CD4-positive, alpha-beta memory T cell (primary cell): ENCODE measurements at regions of chr22 and their contacts with region 1.

Region 1: GRCh38 chr22:23849009-23850006 is 8.4 kb upstream of the SLC2A11 start:
- DNase-seq: peak; percentile 79 to 86 (median 80)
- H3K4me3 ChIP-seq: no peak overlapping the region
- H3K4me3 Mint-ChIP-seq: no peak overlapping the region
- H3K27ac ChIP-seq: no peak overlapping the region
- H3K27ac Mint-ChIP-seq: peak overlapping the region in 1 of 7 donors; percentile 7
- H3K4me1 ChIP-seq: peaks cover 7% of the 10 kb centered on the region
- H3K4me1 Mint-ChIP-seq: peaks cover 0 to 4% (median 2%) of the 10 kb centered on the region in 4 donors
- H3K27me3 ChIP-seq: no peaks in the 10 kb centered on the region
- H3K27me3 Mint-ChIP-seq: no peaks in the 10 kb centered on the region

Region 2: GRCh38 chr22:23539135-23539838 is 310.0 kb before region 1 on chr22:
- CTCF ChIA-PET with region 1: interaction called, 7 read pairs
- POLR2A ChIA-PET with region 1: no interaction called
- intact Hi-C with region 1: loop called (anchors 5 kb)
- DNase-seq: peak; percentile 67 to 74 (median 70)
- H3K4me3 ChIP-seq: no peak overlapping the region
- H3K4me3 Mint-ChIP-seq: peak overlapping the region in 7 of 8 donors; percentile 29 to 79 (median 51)
- H3K27ac ChIP-seq: no peak overlapping the region
- H3K27ac Mint-ChIP-seq: peak overlapping the region in 3 of 7 donors; percentile 1 to 46 (median 31)
- H3K4me1 ChIP-seq: peaks cover 4% of the 10 kb centered on the region
- H3K4me1 Mint-ChIP-seq: peaks cover 3 to 10% (median 8%) of the 10 kb centered on the region in 4 donors
- H3K27me3 ChIP-seq: no peaks in the 10 kb centered on the region
- H3K27me3 Mint-ChIP-seq: peaks cover 1 to 5% of the 10 kb centered on the region in 2 donors

Region 3: GRCh38 chr22:23622634-23623033 is 226.7 kb before region 1 on chr22:
- CTCF ChIA-PET with region 1: interaction called, 7 read pairs
- POLR2A ChIA-PET with region 1: no interaction called
- intact Hi-C with region 1: loop called (anchors 5 kb)
- DNase-seq: no peak
- H3K4me3 ChIP-seq: no peak overlapping the region
- H3K4me3 Mint-ChIP-seq: no peak overlapping the region
- H3K27ac ChIP-seq: no peak overlapping the region
- H3K27ac Mint-ChIP-seq: no peak overlapping the region
- H3K4me1 ChIP-seq: no peaks in the 10 kb centered on the region
- H3K4me1 Mint-ChIP-seq: peaks cover 0 to 3% (median 0%) of the 10 kb centered on the region in 4 donors
- H3K27me3 ChIP-seq: no peaks in the 10 kb centered on the region
- H3K27me3 Mint-ChIP-seq: no peaks in the 10 kb centered on the region